ENCODE measurements at regions of chr16 and their contacts with region 1.

Region 1: DNA sequence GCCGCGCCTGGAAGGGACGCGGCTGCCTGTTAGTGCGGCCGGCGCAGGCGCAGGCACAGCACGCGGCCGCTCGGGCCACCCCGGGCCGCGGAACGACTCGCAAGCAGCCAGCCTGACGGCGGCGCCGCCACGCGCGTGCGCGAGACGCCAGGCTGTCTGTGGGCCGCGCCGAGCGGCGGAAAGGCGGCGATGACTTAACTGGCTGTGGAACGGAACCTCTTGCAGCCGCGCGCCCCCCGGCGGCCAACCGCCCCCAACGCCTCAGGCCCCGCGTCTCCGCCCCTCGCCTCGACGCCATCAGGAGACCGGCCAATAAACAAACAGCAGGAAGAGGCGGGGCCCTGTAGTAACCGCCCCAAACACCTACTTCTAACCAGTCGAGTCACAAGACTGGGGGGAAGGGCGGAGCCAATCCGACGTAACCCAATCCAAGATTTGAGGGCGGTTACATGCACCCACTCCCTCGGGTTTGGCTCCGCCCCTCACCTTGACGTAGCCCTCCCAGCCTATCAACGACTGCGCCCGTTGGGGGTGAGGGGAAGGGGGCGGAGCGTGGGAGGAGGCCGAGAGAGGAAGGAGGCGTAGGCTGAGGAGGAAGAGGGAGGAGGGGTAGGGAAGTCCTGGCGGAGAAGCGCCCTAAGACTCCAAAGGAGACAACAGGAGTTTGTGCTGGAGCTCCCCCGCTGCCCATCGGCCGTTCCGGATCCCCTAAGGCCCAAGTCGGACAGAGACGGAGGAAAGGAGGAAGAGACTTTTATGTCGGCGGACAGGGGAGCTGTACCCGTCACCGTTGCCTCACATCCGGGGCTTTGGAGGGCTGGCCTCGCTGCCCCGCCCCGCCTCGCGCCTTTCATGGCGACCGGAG is at the start of gene FBRS:
- DNase-seq: peak; percentile 99 to 100 (median 100)

Region 2: GRCh38 chr16:30383521-30383920 is 274.6 kb before region 1 on chr16:
- intact Hi-C with region 1: no loop called
- DNase-seq: no peak

Region 3: DNA sequence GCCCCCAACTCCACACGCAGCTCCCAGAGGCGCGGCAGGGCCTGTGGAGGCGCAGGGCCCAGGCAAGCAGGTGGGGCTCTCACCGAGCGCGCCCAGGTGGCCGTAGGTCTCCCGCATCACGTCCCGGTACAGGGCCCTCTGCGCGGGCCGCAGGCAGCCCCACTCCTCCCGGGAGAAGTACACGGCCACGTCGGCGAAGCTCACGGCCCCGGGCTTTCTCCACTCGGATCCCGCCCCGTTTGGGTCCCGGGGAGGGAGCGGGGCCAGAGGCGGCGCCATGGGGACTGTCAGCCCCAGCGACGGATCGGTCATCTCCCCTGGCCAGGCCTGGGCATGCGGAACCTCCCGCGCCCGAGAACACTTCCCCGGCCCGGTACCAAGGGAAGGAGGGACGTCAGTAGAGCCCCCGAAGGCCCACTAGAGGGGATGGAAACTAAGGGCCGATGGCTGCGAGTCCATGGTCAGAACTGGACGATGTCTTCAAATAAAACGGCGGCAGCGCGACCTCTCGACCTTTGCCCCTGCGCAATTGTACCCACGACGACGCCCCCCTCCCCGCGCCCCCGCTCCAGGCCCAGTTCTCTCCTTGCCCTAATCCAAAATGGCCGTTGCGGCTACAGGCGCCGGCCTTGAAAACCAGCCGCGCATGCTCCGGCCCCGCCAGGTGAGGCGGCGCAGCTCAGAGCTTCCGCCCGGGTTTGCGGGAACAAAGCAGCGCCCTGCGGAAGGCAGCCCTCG is 123.6 kb before region 1 on chr16 and contains the start of gene ZNF747:
- intact Hi-C with region 1: loop called (anchors 10 kb)
- DNase-seq: peak; percentile 86 to 98 (median 94)

Region 4: DNA sequence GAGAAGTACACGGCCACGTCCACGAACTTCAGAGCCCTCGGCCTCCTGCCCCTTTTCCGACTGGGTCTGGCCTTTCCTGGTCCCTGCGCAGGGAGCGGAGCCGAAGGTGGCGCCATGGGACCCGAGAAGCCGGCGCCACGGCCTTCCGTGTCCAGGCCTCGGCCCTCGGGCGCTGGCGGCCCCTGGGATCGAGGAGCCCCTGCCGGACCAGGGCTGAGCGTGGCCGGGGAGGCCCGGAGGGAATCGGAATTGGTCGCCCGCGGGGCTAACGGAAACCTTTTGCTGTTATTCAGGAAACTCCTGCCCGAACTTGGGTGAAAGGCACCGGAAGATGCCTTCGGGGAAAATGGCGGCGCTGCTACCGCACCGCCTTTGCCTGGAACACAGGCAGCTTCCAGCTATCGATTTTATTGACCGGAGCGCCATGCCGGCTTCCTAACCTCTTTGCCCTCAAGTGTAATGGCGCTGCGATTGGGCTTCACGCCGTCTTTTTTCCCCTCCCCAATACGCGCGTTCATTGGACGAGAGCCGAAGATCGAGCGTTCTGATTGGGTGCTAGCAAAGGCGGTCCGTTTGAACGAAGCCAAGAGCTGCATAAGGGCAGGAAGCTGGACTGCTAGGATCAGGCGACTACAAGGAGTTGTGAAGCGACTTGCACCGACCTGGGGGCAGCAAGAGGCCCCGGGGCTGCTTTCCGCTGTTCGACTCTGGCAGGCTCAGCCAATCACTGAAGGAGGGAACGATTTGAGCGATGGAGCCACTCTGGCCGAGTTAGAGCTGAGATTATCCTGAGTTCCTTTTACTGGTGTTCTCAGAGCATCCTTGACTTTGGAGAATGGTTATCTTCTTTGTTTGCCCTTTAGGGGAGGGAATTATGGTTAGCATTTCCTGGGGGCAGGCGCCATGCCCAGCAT is 47.9 kb before region 1 on chr16 and contains the start of gene ZNF689:
- intact Hi-C with region 1: loop called (anchors 10 kb)
- DNase-seq: peak; percentile 91 to 99 (median 97)

Region 5: DNA sequence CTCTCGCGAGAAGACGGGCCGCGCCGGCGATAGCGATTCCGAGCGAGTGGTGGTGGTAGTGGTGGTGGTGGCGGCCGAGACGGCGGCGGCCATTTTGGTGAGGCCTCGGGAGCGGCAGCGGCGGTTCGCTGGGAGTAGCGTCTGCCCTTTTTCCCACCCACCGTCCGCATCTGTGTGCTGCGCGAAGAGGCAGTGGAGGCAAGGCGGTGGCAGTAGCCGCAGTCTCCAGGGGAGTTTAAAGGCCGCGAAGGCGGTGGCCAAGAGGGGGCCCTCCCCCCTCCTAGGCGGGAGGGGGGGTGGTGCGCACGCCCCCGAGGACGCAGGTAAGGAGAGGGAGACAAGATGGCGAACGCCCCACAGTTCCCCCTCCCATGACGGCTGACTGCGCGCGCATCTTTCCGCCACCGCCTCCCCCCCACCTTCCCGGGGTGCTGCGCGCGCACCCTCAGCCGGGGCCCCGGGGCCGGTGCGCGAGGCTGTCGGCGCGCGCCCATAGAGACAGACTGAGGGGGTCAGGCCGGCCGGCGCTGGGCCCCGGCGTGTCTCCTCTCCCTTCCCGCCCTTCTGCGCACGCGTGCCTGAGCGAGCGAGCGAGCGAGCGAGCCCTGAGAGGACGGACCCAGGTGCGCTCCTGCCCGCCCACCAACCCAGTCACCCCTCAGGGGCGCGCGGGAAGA is 40.2 kb after region 1 on chr16:
- intact Hi-C with region 1: loop called (anchors 1 kb)
- DNase-seq: peak; percentile 60 to 99 (median 88)

Region 6: DNA sequence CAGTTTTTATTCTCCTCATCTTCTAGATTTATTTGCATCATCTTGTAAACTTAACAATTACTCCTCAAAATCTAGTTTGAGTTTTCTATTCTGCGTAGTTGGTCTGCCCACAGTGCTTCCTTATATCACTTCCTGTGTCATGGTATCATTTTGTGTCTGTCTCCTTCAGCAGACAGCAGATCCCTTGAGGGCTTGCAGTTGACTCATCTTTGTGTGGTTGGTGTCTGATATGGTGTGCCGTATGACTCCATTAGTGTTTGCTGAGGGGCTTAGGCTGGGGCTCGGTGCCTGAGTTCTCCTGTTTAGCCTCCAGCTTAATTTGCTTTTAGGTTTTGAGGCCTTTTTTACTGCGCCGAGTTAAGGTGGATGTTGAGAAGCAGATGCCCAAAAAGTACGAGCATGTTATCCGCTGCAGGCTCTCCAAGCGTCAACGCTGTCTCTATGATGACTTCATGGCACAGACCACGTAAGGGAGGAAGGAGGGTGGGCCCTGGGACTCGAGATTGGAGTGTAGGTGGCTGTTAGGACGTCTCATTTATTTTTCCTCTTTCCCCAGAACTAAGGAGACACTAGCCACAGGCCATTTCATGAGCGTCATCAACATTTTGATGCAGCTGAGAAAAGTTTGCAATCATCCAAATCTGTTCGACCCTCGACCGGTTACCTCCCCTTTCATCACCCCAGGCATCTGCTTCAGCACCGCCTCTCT is 57.8 kb after region 1 on chr16:
- intact Hi-C with region 1: no loop called
- DNase-seq: peak in 1 of 42 donors; percentile 15

Region 7: GRCh38 chr16:30922960-30923535 is 264.9 kb after region 1 on chr16:
- intact Hi-C with region 1: loop called (anchors 10 kb)
- DNase-seq: peak; percentile 98 to 100 (median 100)